ENCODE measurements at regions of chr15 and their contacts with region 1.

Region 1: GRCh38 chr15:34101366-34102175 is at the starts of genes EMC7 and PGBD4:
- DNase-seq: peak; percentile 99
- ATAC-seq: peak; percentile 100
- H3K4me3 ChIP-seq: peak within 1 kb of the TSS; percentile 93
- H3K27ac ChIP-seq: peak within 1 kb of the TSS; percentile 94
- H3K4me1 ChIP-seq: peaks cover 4% of the 10 kb centered on the region
- H3K27me3 ChIP-seq: no peaks in the 10 kb centered on the region
- total RNA-seq, gene EMC7: 66.0 to 90.0 (median 72.8) TPM
- total RNA-seq, gene PGBD4: 2.2 to 2.9 (median 2.7) TPM

Region 2: DNA sequence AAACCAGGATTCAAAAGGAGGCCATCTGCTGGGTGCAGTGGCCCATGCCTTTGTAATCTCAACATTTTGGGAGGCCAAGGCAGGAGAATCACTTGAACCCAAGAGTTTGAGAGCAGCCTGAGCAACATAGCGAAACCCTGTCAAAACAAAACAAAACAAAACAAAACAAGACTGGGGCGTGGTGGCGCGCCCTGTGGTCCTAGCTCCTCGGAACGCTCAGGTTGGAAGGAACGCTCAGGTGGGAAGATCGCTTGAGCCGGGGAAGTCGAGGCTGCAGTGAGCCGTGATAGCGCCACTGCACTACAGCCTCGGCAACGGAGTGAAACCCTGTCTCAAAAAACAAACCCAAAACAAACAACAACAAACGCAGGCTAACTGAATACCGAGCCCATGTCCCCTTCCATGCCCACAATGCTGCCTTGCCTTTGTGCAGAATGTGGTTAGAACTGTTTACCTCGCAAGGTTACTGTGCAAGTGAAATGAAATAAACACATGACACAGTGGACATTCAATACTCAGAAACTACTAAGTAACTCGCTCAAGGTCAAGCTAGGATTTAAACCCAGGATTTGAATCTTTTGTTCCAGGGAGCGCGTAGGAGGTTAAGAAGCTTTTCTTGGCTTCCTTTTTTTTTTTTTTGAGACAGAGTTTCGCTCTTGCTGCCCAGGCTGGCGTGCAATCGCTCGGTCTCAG is 122.5 kb after region 1 on chr15:
- intact Hi-C with region 1: loop called in 1 of 4 experiments (anchors 5 kb)
- DNase-seq: peak in 1 of 3 donors; percentile 28
- ATAC-seq: peak in 1 of 2 donors; percentile 3
- H3K4me3 ChIP-seq: peak overlapping the region; percentile 96
- H3K27ac ChIP-seq: peak overlapping the region; percentile 93
- H3K4me1 ChIP-seq: no peaks in the 10 kb centered on the region
- H3K27me3 ChIP-seq: no peaks in the 10 kb centered on the region

Measured in right cardiac atrium (tissue), 5 donors.